ENCODE measurements at regions of chr1 and their contacts with region 1.

Region 1: GRCh38 chr1:46724991-46725735 is 6.2 kb upstream of the EFCAB14 start:
- DNase-seq: peak; percentile 81 to 94
- H3K4me3 ChIP-seq: no peak overlapping the region
- H3K27ac ChIP-seq: no peak overlapping the region
- H3K4me1 ChIP-seq: peaks cover under 1 to 7% (median 5%) of the 10 kb centered on the region in 4 donors
- H3K27me3 ChIP-seq: peaks cover 0 to 28% (median 3%) of the 10 kb centered on the region in 3 donors
- CTCF ChIP-seq: peak in 5 of 7 experiments; percentile 69 to 94 (median 81)
- EP300 ChIP-seq: no peak
- POLR2A ChIP-seq: no peak

Region 2: GRCh38 chr1:46622344-46622743 is 102.8 kb before region 1 on chr1:
- intact Hi-C with region 1: loop called (anchors 5 kb)
- DNase-seq: peak; percentile 42 to 56
- H3K4me3 ChIP-seq: no peak overlapping the region
- H3K27ac ChIP-seq: no peak overlapping the region
- H3K4me1 ChIP-seq: peaks cover 0 to 10% (median 5%) of the 10 kb centered on the region in 4 donors
- H3K27me3 ChIP-seq: no peaks in the 10 kb centered on the region
- CTCF ChIP-seq: peak in 5 of 7 experiments; percentile 50 to 57 (median 53)
- EP300 ChIP-seq: no peak
- POLR2A ChIP-seq: no peak

Measured in stomach (tissue), 19 donors.